MCF 10A (cell line): ENCODE measurements at regions of chr5 and their contacts with region 1.

Region 1: DNA sequence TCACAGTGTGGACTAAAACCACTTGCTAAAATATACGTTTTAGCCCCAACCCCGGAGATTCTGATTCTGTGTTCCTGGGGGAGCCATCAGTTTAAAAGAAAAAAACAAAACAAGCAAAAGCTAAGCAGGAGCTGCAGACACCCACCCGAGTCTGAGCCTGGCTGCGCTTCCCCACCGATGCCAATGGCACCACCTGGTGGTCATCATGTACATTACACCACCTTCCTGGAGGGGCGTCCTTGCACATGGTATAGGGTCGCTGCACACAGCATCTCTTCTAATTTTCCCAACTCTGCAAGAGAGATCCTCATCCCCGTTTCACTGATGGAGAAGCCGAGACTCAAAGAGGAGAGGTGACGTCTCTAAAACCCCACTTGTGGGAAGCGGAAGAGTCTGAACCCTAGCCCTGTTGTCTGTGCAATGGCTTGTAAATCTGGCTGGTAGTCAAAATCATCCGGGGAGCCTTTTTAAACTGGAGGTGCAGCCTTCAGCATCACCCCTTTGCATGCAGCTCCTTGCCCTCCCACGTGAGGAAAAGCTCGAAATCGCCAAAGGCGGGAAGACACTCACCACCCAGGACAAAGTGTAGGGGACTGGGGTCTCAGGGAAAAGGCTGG is 23.1 kb upstream of the CNOT6 start:
- DNase-seq: peak; percentile 72
- H3K4me3 Mint-ChIP-seq: no peak overlapping the region
- H3K27ac Mint-ChIP-seq: no peak overlapping the region
- H3K4me1 Mint-ChIP-seq: peaks cover 18% of the 10 kb centered on the region
- H3K27me3 Mint-ChIP-seq: no peaks in the 10 kb centered on the region
- CTCF ChIP-seq: peak; percentile 100

Region 2: DNA sequence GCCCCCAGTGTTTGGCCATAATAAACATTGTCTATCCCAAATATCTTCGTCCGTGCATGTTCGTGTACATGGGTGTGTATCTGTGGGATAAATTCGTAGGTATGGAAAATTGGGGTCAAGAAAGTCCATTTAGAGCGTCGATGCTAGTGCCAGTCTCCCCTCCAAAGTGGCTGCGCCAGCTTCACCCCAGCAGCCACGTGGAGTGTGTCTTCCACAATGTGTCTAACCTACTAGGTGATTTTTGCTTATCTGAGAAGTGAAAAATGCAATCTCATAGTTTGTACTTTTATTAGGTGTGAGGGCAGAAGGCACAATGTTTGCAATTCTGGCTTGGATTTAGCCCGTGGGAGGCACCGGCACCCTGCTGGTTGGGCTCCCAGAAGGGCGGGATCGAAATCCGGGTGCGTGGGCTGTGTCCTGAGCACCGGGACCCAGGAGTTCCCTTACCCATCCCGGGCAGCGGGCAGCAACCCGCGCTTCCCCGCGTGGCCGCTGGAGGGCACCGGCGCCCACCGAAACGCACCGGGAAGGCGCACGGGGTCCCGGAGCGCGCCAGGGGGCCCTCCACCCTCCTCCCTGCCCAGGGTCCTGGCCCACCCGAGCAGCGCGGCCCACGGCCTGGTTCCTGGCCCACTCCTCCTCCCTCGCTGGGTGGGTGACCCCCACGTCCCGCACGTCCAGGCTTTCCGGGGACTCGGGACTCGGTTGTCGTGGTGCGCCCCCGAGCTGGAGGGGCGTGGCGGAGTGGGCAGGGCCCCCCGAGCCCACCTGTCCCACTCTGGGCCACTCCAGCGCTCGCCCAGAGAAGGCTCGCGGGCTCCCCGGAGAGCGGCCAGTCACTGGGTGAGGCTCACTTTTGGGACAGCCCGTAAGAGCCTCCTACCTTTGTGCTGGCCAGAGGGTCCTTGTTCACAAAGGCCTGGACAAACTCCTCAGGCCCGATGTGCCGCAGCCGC is 344.1 kb before region 1 on chr5:
- CTCF ChIA-PET with region 1: interaction called, 12 read pairs
- POLR2A ChIA-PET with region 1: no interaction called
- intact Hi-C with region 1: loop called (anchors 1 kb)
- DNase-seq: peak; percentile 58
- H3K4me3 Mint-ChIP-seq: no peak overlapping the region
- H3K27ac Mint-ChIP-seq: no peak overlapping the region
- H3K4me1 Mint-ChIP-seq: peaks cover 17% of the 10 kb centered on the region
- H3K27me3 Mint-ChIP-seq: peaks cover 32% of the 10 kb centered on the region
- CTCF ChIP-seq: peak; percentile 99

Region 3: DNA sequence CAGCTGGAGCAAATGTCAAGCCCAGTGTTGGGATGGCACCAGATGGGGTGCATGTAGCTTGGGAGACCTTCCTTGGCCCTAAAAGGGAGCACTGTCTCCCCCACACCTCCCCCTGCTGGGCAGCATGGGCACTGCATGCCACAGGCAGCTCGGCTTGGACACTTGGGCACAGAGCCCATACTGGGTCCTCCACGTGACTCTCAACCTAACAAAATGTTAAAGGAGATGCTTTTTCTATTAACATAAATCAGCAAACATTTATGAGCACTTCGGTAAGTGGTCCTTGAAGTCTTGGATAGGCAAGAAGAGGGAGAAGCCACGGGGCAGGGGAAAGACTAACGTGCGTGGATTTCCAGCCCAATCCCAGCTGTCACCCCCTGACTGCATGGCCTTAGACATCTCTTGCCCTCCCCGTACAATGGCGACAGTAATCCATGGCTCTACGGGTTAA is 155.3 kb before region 1 on chr5:
- CTCF ChIA-PET with region 1: interaction called, 53 read pairs
- POLR2A ChIA-PET with region 1: interaction called, 5 read pairs
- intact Hi-C with region 1: loop called (anchors 1 kb)
- DNase-seq: peak; percentile 82
- H3K4me3 Mint-ChIP-seq: no peak overlapping the region
- H3K27ac Mint-ChIP-seq: no peak overlapping the region
- H3K4me1 Mint-ChIP-seq: no peaks in the 10 kb centered on the region
- H3K27me3 Mint-ChIP-seq: no peaks in the 10 kb centered on the region
- CTCF ChIP-seq: peak; percentile 95

Region 4: DNA sequence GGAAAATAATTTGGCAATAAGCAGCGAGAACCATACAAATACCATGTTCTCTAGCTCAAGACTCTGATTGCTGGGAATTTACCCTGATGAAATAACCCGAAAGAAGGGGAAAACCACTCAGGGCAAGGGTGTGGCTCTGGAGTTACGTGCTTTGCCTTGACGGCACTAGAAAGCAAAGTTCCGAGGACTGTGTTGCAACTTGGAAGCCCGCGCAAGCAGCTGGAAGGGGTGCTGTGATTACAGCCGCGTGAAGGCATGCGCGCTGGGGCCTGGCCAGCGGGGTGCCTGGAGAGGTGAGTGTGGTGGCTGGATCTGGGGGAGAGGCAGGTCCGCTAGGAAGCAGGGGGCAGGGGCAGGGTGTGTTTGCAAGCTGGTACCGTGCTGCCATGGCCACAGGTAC is 29.5 kb before region 1 on chr5:
- CTCF ChIA-PET with region 1: interaction called, 9 read pairs
- POLR2A ChIA-PET with region 1: interaction called, 16 read pairs
- intact Hi-C with region 1: loop called (anchors 1 kb)
- DNase-seq: peak; percentile 100
- H3K4me3 Mint-ChIP-seq: peak overlapping the region; percentile 58
- H3K27ac Mint-ChIP-seq: peak overlapping the region; percentile 88
- H3K4me1 Mint-ChIP-seq: peaks cover 15% of the 10 kb centered on the region
- H3K27me3 Mint-ChIP-seq: no peaks in the 10 kb centered on the region
- CTCF ChIP-seq: no peak

Region 5: GRCh38 chr5:180499684-180500083 is 28.6 kb after region 1 on chr5:
- CTCF ChIA-PET with region 1: interaction called, 12 read pairs
- POLR2A ChIA-PET with region 1: interaction called, 3 read pairs
- intact Hi-C with region 1: no loop called
- DNase-seq: peak; percentile 24
- H3K4me3 Mint-ChIP-seq: no peak overlapping the region
- H3K27ac Mint-ChIP-seq: peak overlapping the region; percentile 39
- H3K4me1 Mint-ChIP-seq: peaks cover 32% of the 10 kb centered on the region
- H3K27me3 Mint-ChIP-seq: no peaks in the 10 kb centered on the region
- CTCF ChIP-seq: no peak

Region 6: GRCh38 chr5:180670586-180671359 is 199.7 kb after region 1 on chr5:
- CTCF ChIA-PET with region 1: interaction called, 6 read pairs
- POLR2A ChIA-PET with region 1: no interaction called
- intact Hi-C with region 1: loop called (anchors 10 kb)
- DNase-seq: peak; percentile 75
- H3K4me3 Mint-ChIP-seq: no peak overlapping the region
- H3K27ac Mint-ChIP-seq: no peak overlapping the region
- H3K4me1 Mint-ChIP-seq: peaks cover 8% of the 10 kb centered on the region
- H3K27me3 Mint-ChIP-seq: peaks cover 13% of the 10 kb centered on the region
- CTCF ChIP-seq: peak; percentile 81